CD8-positive, alpha-beta T cell (primary cell): ENCODE measurements at regions of chr14 and their contacts with region 1.

Region 1: DNA sequence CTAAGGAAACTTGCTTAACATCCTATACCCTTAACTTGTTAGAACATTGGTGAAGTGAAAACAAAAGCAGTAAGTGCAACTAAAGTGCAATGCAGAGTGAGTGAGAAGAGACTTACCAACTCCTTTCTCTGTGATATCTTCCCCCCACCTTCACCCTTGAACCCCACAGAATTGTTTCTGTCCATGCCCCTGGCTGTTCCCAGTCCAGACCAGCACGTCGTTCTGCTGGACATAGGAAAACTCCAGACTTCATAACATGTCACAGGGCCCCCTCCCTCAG is 91.9 kb downstream of the DAD1 start:
- DNase-seq: peak in 1 of 9 experiments; percentile 34
- ATAC-seq: peak; percentile 27
- H3K4me3 ChIP-seq: peak overlapping the region; percentile 53 to 54
- H3K4me3 Mint-ChIP-seq: peak overlapping the region; percentile 84
- H3K27ac ChIP-seq: peak overlapping the region; percentile 38 to 59
- H3K27ac Mint-ChIP-seq: peak overlapping the region; percentile 99
- H3K4me1 ChIP-seq: peaks cover 9% of the 10 kb centered on the region
- H3K4me1 Mint-ChIP-seq: peaks cover 50% of the 10 kb centered on the region
- H3K27me3 ChIP-seq: no peaks in the 10 kb centered on the region
- H3K27me3 Mint-ChIP-seq: no peaks in the 10 kb centered on the region
- CTCF ChIP-seq: no peak

Region 2: GRCh38 chr14:21840765-21841164 is 656.3 kb before region 1 on chr14:
- CTCF ChIA-PET with region 1: no interaction called
- POLR2A ChIA-PET with region 1: no interaction called
- intact Hi-C with region 1: loop called in 1 of 2 experiments (anchors 2 kb)
- DNase-seq: peak in 2 of 9 experiments; percentile 56 to 66
- ATAC-seq: peak; percentile 56
- H3K4me3 ChIP-seq: no peak overlapping the region
- H3K4me3 Mint-ChIP-seq: peak overlapping the region; percentile 63
- H3K27ac ChIP-seq: no peak overlapping the region
- H3K27ac Mint-ChIP-seq: peak overlapping the region; percentile 80
- H3K4me1 ChIP-seq: no peaks in the 10 kb centered on the region
- H3K4me1 Mint-ChIP-seq: peaks cover 3% of the 10 kb centered on the region
- H3K27me3 ChIP-seq: no peaks in the 10 kb centered on the region
- H3K27me3 Mint-ChIP-seq: peaks cover 15% of the 10 kb centered on the region
- CTCF ChIP-seq: no peak

Region 3: GRCh38 chr14:22472935-22473854 is 23.9 kb before region 1 on chr14:
- CTCF ChIA-PET with region 1: no interaction called
- POLR2A ChIA-PET with region 1: no interaction called
- intact Hi-C with region 1: no loop called
- DNase-seq: peak in 2 of 9 experiments; percentile 49 to 61
- ATAC-seq: no peak
- H3K4me3 ChIP-seq: no peak overlapping the region
- H3K4me3 Mint-ChIP-seq: no peak overlapping the region
- H3K27ac ChIP-seq: peak overlapping the region in 1 of 2 experiments; percentile 25
- H3K27ac Mint-ChIP-seq: no peak overlapping the region
- H3K4me1 ChIP-seq: no peaks in the 10 kb centered on the region
- H3K4me1 Mint-ChIP-seq: no peaks in the 10 kb centered on the region
- H3K27me3 ChIP-seq: no peaks in the 10 kb centered on the region
- H3K27me3 Mint-ChIP-seq: no peaks in the 10 kb centered on the region
- CTCF ChIP-seq: no peak